Caco-2 (cell line): ENCODE measurements at regions of chr10 and their contacts with region 1.

Region 1: GRCh38 chr10:88896994-88897853 is 17.2 kb downstream of the STAMBPL1 start:
- DNase-seq: peak; percentile 49 to 67
- H3K4me3 ChIP-seq: no peak overlapping the region
- H3K4me3 Mint-ChIP-seq: peak overlapping the region; percentile 44
- H3K27ac Mint-ChIP-seq: peak overlapping the region; percentile 76
- H3K4me1 ChIP-seq: peaks cover 60% of the 10 kb centered on the region
- H3K4me1 Mint-ChIP-seq: peaks cover 20% of the 10 kb centered on the region
- H3K27me3 ChIP-seq: no peaks in the 10 kb centered on the region
- H3K27me3 Mint-ChIP-seq: no peaks in the 10 kb centered on the region
- CTCF ChIP-seq: no peak

Region 2: GRCh38 chr10:88880282-88881076 is 16.7 kb before region 1 on chr10:
- CTCF ChIA-PET with region 1: no interaction called
- POLR2A ChIA-PET with region 1: no interaction called
- intact Hi-C with region 1: loop called (anchors 2 kb)
- DNase-seq: peak; percentile 68 to 70
- H3K4me3 ChIP-seq: peak overlapping the region; percentile 92
- H3K4me3 Mint-ChIP-seq: peak overlapping the region; percentile 90
- H3K27ac Mint-ChIP-seq: no peak overlapping the region
- H3K4me1 ChIP-seq: no peaks in the 10 kb centered on the region
- H3K4me1 Mint-ChIP-seq: no peaks in the 10 kb centered on the region
- H3K27me3 ChIP-seq: no peaks in the 10 kb centered on the region
- H3K27me3 Mint-ChIP-seq: peaks cover 15% of the 10 kb centered on the region
- CTCF ChIP-seq: peak in 1 of 2 experiments; percentile 14